Naive thymus-derived CD4-positive, alpha-beta T cell (primary cell): ENCODE measurements at regions of chr6 and their contacts with region 1.

Region 1: GRCh38 chr6:44475779-44476434 is 88.4 kb downstream of the CDC5L start:
- DNase-seq: peak; percentile 38 to 78 (median 64)
- ATAC-seq: peak; percentile 82
- H3K4me3 ChIP-seq: no peak overlapping the region
- H3K4me3 Mint-ChIP-seq: no peak overlapping the region
- H3K27ac ChIP-seq: no peak overlapping the region
- H3K27ac Mint-ChIP-seq: no peak overlapping the region
- H3K4me1 ChIP-seq: peaks cover 0 to 9% of the 10 kb centered on the region in 2 donors
- H3K4me1 Mint-ChIP-seq: peaks cover 0 to 2% (median 0%) of the 10 kb centered on the region in 7 donors
- H3K27me3 ChIP-seq: no peaks in the 10 kb centered on the region
- H3K27me3 Mint-ChIP-seq: peaks cover 0 to 8% (median 0%) of the 10 kb centered on the region in 5 donors

Region 2: GRCh38 chr6:44593539-44593944 is 117.6 kb after region 1 on chr6:
- CTCF ChIA-PET with region 1: no interaction called
- POLR2A ChIA-PET with region 1: no interaction called
- intact Hi-C with region 1: loop called in 1 of 2 experiments (anchors 5 kb)
- DNase-seq: peak in 8 of 9 donors; percentile 8 to 48 (median 36)
- ATAC-seq: peak; percentile 63
- H3K4me3 ChIP-seq: no peak overlapping the region
- H3K4me3 Mint-ChIP-seq: no peak overlapping the region
- H3K27ac ChIP-seq: no peak overlapping the region
- H3K27ac Mint-ChIP-seq: peak overlapping the region in 1 of 9 donors; percentile 59
- H3K4me1 ChIP-seq: no peaks in the 10 kb centered on the region
- H3K4me1 Mint-ChIP-seq: peaks cover 0 to 9% (median 0%) of the 10 kb centered on the region in 7 donors
- H3K27me3 ChIP-seq: no peaks in the 10 kb centered on the region
- H3K27me3 Mint-ChIP-seq: peaks cover 11 to 20% (median 14%) of the 10 kb centered on the region in 5 donors